Mammary epithelial cell (primary cell): ENCODE measurements at regions of chr1 and their contacts with region 1.

Region 1: GRCh38 chr1:205523891-205524793 is 19.7 kb downstream of the CDK18 start:
- DNase-seq: peak; percentile 52
- H3K4me3 ChIP-seq: no peak overlapping the region
- H3K27ac ChIP-seq: no peak overlapping the region
- H3K4me1 ChIP-seq: no peaks in the 10 kb centered on the region
- H3K27me3 ChIP-seq: no peaks in the 10 kb centered on the region
- CTCF ChIP-seq: peak; percentile 78 to 83

Region 2: GRCh38 chr1:205273551-205273982 is 250.6 kb before region 1 on chr1:
- CTCF ChIA-PET with region 1: no interaction called
- dilution Hi-C with region 1: no loop called
- in situ Hi-C with region 1: no loop called
- intact Hi-C with region 1: loop called (anchors 2 kb)
- DNase-seq: peak; percentile 65
- H3K4me3 ChIP-seq: no peak overlapping the region
- H3K27ac ChIP-seq: no peak overlapping the region
- H3K4me1 ChIP-seq: peaks cover 29% of the 10 kb centered on the region
- H3K27me3 ChIP-seq: no peaks in the 10 kb centered on the region
- CTCF ChIP-seq: peak; percentile 99

Region 3: GRCh38 chr1:205354259-205354904 is 169.8 kb before region 1 on chr1:
- CTCF ChIA-PET with region 1: interaction called, 3 read pairs
- dilution Hi-C with region 1: no loop called
- in situ Hi-C with region 1: no loop called
- intact Hi-C with region 1: loop called (anchors 1 kb)
- DNase-seq: peak; percentile 42
- H3K4me3 ChIP-seq: no peak overlapping the region
- H3K27ac ChIP-seq: no peak overlapping the region
- H3K4me1 ChIP-seq: peaks cover 10% of the 10 kb centered on the region
- H3K27me3 ChIP-seq: no peaks in the 10 kb centered on the region
- CTCF ChIP-seq: peak; percentile 85 to 87

Region 4: GRCh38 chr1:205396967-205397616 is 127.0 kb before region 1 on chr1:
- CTCF ChIA-PET with region 1: no interaction called
- dilution Hi-C with region 1: no loop called
- in situ Hi-C with region 1: loop called (anchors 5 to 10 kb)
- intact Hi-C with region 1: loop called (anchors 1 kb)
- DNase-seq: peak; percentile 52
- H3K4me3 ChIP-seq: no peak overlapping the region
- H3K27ac ChIP-seq: no peak overlapping the region
- H3K4me1 ChIP-seq: no peaks in the 10 kb centered on the region
- H3K27me3 ChIP-seq: no peaks in the 10 kb centered on the region
- CTCF ChIP-seq: peak; percentile 77 to 86

Region 5: GRCh38 chr1:205485338-205486228 is 38.6 kb before region 1 on chr1:
- CTCF ChIA-PET with region 1: interaction called, 15 read pairs
- dilution Hi-C with region 1: loop called (anchors 5 kb)
- in situ Hi-C with region 1: loop called (anchors 5 kb)
- intact Hi-C with region 1: loop called (anchors 1 kb)
- DNase-seq: peak; percentile 56
- H3K4me3 ChIP-seq: no peak overlapping the region
- H3K27ac ChIP-seq: no peak overlapping the region
- H3K4me1 ChIP-seq: peaks cover 16% of the 10 kb centered on the region
- H3K27me3 ChIP-seq: no peaks in the 10 kb centered on the region
- CTCF ChIP-seq: peak; percentile 76 to 96

Region 6: GRCh38 chr1:205547936-205548827 is 24.0 kb after region 1 on chr1:
- CTCF ChIA-PET with region 1: no interaction called
- dilution Hi-C with region 1: no loop called
- in situ Hi-C with region 1: no loop called
- intact Hi-C with region 1: no loop called
- DNase-seq: no peak
- H3K4me3 ChIP-seq: no peak overlapping the region
- H3K27ac ChIP-seq: no peak overlapping the region
- H3K4me1 ChIP-seq: peaks cover 9% of the 10 kb centered on the region
- H3K27me3 ChIP-seq: no peaks in the 10 kb centered on the region
- CTCF ChIP-seq: no peak

Region 7: GRCh38 chr1:205584732-205585131 is 60.6 kb after region 1 on chr1:
- CTCF ChIA-PET with region 1: no interaction called
- dilution Hi-C with region 1: loop called (anchors 5 kb)
- in situ Hi-C with region 1: no loop called
- intact Hi-C with region 1: no loop called
- DNase-seq: no peak
- H3K4me3 ChIP-seq: no peak overlapping the region
- H3K27ac ChIP-seq: no peak overlapping the region
- H3K4me1 ChIP-seq: no peaks in the 10 kb centered on the region
- H3K27me3 ChIP-seq: no peaks in the 10 kb centered on the region
- CTCF ChIP-seq: peak in 1 of 2 donors; percentile 22

Region 8: DNA sequence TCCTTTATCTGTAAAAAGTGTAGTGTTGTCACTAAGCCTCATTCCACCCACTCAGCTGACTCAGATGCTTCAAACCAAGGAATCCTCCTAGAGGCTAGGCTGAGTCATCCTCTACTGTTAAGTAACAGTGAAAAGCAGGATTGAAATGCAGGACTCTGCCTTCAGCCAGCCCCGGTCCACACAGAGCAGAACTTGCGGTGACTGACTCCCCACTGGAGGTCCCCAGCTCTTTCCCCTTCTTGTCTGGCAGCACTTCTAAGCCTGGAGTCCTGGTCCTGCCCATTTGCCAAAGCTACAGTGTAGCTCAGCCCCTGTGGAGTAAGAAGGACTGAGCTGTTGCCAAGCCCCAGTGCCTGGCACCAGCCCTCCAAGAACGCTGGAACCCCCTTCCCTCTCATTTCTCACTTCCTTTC is 477.3 kb after region 1 on chr1:
- CTCF ChIA-PET with region 1: interaction called, 11 read pairs
- dilution Hi-C with region 1: no loop called
- in situ Hi-C with region 1: no loop called
- intact Hi-C with region 1: no loop called
- DNase-seq: peak; percentile 94
- H3K4me3 ChIP-seq: peak overlapping the region; percentile 45 to 62 (median 60)
- H3K27ac ChIP-seq: peak overlapping the region; percentile 76
- H3K4me1 ChIP-seq: peaks cover 53% of the 10 kb centered on the region
- H3K27me3 ChIP-seq: no peaks in the 10 kb centered on the region
- CTCF ChIP-seq: peak in 1 of 2 donors; percentile 3